Heart right ventricle (tissue), 16 donors: ENCODE measurements at regions of chr20 and their contacts with region 1.

Region 1: GRCh38 chr20:44733341-44734069 is 12.2 kb upstream of the KCNK15 start:
- DNase-seq: peak; percentile 66 to 69
- ATAC-seq: peak; percentile 21 to 65 (median 50)
- H3K4me3 ChIP-seq: no peak overlapping the region
- H3K27ac ChIP-seq: no peak overlapping the region
- H3K4me1 ChIP-seq: peaks cover 3 to 35% (median 22%) of the 10 kb centered on the region in 9 donors
- H3K27me3 ChIP-seq: no peaks in the 10 kb centered on the region
- CTCF ChIP-seq: peak; percentile 85 to 96 (median 94)

Region 2: DNA sequence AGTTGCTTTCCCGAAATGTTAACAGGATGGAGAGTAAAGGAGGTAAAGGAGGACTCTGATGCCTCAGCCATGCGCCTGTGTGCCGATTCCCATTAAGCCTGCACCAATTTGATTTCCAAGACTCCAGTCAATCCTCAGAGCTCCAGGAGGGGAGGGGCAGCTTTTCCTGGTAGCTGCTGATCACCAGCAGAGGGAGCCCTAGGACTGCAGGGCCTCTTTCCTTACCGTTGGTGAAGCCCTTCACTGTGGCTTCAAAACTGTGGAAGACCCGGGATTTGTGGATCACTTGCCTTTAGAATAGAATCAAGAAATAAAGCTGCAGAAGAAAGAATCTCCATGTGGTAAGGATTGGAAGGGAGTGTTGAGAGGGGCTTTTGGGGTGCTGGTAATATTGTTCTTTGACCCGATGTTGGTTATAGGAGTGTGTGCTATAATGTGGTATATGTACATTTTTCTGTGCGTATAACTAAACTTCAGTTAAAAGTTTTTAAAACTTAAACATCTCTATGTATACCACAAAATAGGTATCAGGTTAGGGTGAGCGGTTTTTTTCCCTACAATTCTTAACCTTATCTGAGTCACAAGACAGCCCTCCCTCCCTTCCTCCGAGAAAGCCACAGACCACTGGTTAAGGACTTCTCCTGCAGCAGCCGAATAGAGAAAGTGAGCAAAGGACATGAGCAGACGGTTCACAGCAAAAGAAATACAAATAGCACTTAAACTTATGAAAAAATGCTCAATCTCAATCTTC is 516.0 kb before region 1 on chr20:
- intact Hi-C with region 1: loop called in 3 of 10 experiments (anchors 5 to 10 kb)
- DNase-seq: peak; percentile 52 to 69
- ATAC-seq: peak; percentile 66 to 84 (median 78)
- H3K4me3 ChIP-seq: peak overlapping the region in 8 of 10 donors; percentile 2 to 43 (median 27)
- H3K27ac ChIP-seq: peak overlapping the region in 8 of 10 donors; percentile 1 to 72 (median 48)
- H3K4me1 ChIP-seq: peaks cover 0 to 35% (median 18%) of the 10 kb centered on the region in 9 donors
- H3K27me3 ChIP-seq: no peaks in the 10 kb centered on the region
- CTCF ChIP-seq: peak; percentile 63 to 95 (median 84)

Region 3: DNA sequence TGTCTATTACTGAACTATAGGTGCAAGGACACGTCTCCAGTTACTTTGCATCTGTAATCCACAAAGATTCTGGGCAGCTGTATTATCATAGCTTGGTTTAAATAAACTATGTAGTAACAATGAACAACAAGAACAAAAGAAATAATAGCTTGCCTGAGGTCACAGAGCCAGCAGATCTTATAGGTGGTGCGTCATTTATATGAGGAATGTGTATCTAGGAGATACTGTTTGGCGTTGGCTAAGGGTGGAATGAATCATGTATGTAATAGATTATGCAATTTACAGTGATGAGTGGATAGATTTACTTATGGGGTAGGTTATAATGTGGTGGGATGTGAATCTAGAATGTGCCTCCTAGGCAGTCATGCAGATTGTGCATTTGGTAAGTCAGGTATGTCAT is 335.2 kb before region 1 on chr20:
- intact Hi-C with region 1: loop called in 1 of 10 experiments (anchors 10 kb)
- DNase-seq: no peak
- ATAC-seq: no peak
- H3K4me3 ChIP-seq: no peak overlapping the region
- H3K27ac ChIP-seq: no peak overlapping the region
- H3K4me1 ChIP-seq: no peaks in the 10 kb centered on the region
- H3K27me3 ChIP-seq: peaks cover 0 to 22% (median 10%) of the 10 kb centered on the region in 7 donors
- CTCF ChIP-seq: no peak

Region 4: DNA sequence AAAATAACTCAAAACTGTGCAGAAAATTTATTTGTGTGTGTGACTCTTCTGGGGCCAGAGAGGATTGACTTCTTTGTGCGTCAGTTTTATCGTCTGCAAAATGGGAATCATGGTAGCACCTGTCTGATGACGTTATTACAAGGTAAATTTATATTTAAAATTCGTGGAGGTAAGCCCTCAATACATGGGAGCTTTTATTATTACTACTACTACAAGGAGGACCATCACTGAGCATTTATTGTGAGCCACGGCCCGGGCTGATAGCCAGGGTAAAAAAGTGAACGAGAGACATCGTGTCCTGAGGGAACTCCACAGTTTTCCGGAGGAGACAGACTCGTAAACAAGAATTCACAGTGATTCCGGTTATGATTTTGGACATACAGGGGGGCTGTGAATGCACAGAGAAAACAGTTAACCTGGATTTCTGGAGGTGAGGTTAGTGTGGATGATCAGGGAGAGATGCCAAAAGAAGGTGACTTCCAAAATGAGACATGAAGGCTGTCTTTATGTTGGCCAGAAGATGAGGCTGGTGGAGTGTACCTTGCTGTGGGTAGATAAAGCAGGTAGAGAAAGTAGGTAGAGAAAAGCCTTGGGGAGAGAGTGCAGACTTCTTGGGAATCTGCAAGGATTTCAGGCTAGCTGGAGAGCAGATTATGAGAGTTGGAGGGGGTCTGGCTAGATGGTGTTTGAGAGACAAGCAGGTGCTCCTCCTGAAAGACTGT is 201.1 kb before region 1 on chr20:
- intact Hi-C with region 1: loop called in 2 of 10 experiments (anchors 10 kb)
- DNase-seq: peak; percentile 32 to 35
- ATAC-seq: peak in 5 of 8 donors; percentile 6 to 52 (median 42)
- H3K4me3 ChIP-seq: peak overlapping the region; percentile 63 to 96 (median 82)
- H3K27ac ChIP-seq: peak overlapping the region; percentile 60 to 85 (median 80)
- H3K4me1 ChIP-seq: peaks cover 3 to 47% (median 21%) of the 10 kb centered on the region in 9 donors
- H3K27me3 ChIP-seq: peaks cover 0 to 10% (median 0%) of the 10 kb centered on the region in 7 donors
- CTCF ChIP-seq: no peak

Region 5: DNA sequence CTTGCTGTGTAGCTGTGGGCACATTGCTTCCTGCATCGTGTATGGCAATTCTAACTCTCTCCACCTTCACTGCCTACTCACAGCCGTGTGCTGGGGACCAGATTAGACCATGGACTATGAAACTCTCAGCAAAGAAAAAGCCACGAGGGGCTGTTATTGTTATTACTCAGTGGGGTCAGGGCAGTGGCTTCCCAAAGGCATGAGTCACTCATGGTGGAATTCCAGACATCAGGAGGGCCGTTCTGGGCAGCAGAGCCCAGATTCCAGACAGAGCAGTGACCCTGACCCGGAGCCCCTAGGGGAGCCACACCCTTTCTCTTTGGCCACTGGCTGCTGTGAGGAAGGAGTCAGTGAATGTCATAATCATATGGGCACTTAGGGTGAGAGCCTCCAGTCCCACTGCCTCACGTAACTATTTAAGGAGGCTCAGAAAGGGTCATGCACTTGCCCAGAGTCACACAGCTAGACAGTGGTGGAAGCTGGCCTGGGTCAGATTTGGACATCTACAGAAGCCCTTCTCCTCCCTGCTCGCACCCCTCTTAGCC is 40.5 kb before region 1 on chr20:
- intact Hi-C with region 1: loop called in 1 of 10 experiments (anchors 1 kb)
- DNase-seq: peak; percentile 71 to 73
- ATAC-seq: peak; percentile 67 to 90 (median 76)
- H3K4me3 ChIP-seq: no peak overlapping the region
- H3K27ac ChIP-seq: peak overlapping the region; percentile 26 to 88 (median 76)
- H3K4me1 ChIP-seq: peaks cover 15 to 61% (median 42%) of the 10 kb centered on the region in 9 donors
- H3K27me3 ChIP-seq: no peaks in the 10 kb centered on the region
- CTCF ChIP-seq: no peak